ENCODE measurements at regions of chr13 and their contacts with region 1.

Region 1: GRCh38 chr13:91381371-91381770 is 17.1 kb upstream of the GPC5 start:
- DNase-seq: no peak
- H3K4me3 ChIP-seq: no peak overlapping the region
- H3K27ac ChIP-seq: no peak overlapping the region
- H3K4me1 ChIP-seq: no peaks in the 10 kb centered on the region
- H3K27me3 ChIP-seq: no peaks in the 10 kb centered on the region
- CTCF ChIP-seq: peak; percentile 42; the same call in 1 of the 2 replicates

Region 2: GRCh38 chr13:91278888-91279287 is 102.5 kb before region 1 on chr13:
- CTCF ChIA-PET with region 1: no interaction called
- POLR2A ChIA-PET with region 1: no interaction called
- intact Hi-C with region 1: no loop called
- DNase-seq: no peak
- H3K4me3 ChIP-seq: no peak overlapping the region
- H3K27ac ChIP-seq: no peak overlapping the region
- H3K4me1 ChIP-seq: no peaks in the 10 kb centered on the region
- H3K27me3 ChIP-seq: no peaks in the 10 kb centered on the region
- CTCF ChIP-seq: no peak

Region 3: DNA sequence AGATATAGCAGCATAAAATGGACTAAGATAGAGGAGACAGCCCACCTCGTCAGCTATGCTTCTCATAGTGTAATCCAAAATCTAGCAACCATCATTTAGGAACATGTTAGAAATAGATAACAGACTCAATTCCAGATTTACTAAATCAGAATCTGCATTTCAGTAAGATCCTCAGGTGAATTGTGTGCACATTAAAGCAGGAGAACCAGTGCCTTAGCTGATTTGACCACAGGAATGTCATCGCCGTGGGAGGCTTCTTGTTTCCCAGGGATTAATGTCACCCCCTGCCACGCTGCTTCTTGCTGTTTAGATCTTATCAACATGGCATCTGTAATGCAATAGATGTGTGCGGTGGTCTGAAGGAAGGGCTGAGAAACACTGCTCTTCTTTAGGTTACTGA is 101.1 kb after region 1 on chr13:
- CTCF ChIA-PET with region 1: no interaction called
- POLR2A ChIA-PET with region 1: no interaction called
- intact Hi-C with region 1: no loop called
- DNase-seq: no peak
- H3K4me3 ChIP-seq: no peak overlapping the region
- H3K27ac ChIP-seq: no peak overlapping the region
- H3K4me1 ChIP-seq: no peaks in the 10 kb centered on the region
- H3K27me3 ChIP-seq: no peaks in the 10 kb centered on the region
- CTCF ChIP-seq: no peak

Region 4: GRCh38 chr13:91722267-91722884 is 341.0 kb after region 1 on chr13:
- CTCF ChIA-PET with region 1: no interaction called
- POLR2A ChIA-PET with region 1: no interaction called
- intact Hi-C with region 1: loop called (anchors 2 kb)
- DNase-seq: no peak
- H3K4me3 ChIP-seq: no peak overlapping the region
- H3K27ac ChIP-seq: no peak overlapping the region
- H3K4me1 ChIP-seq: no peaks in the 10 kb centered on the region
- H3K27me3 ChIP-seq: no peaks in the 10 kb centered on the region
- CTCF ChIP-seq: peak; percentile 76

Measured in PC-9 (cell line).